B cell (primary cell): ENCODE measurements at regions of chr5 and their contacts with region 1.

Region 1: GRCh38 chr5:80654391-80655230 is at the starts of genes DHFR and MSH3:
- DNase-seq: peak; percentile 94
- ATAC-seq: peak; percentile 73
- H3K4me3 ChIP-seq: peak within 1 kb of the TSS; percentile 59 to 90 (median 74)
- H3K4me3 Mint-ChIP-seq: peak within 1 kb of the TSS; percentile 93
- H3K27ac ChIP-seq: peak within 1 kb of the TSS; percentile 68 to 71
- H3K27ac Mint-ChIP-seq: peak within 1 kb of the TSS; percentile 95
- H3K4me1 ChIP-seq: peaks cover 17 to 21% of the 10 kb centered on the region in 2 donors
- H3K4me1 Mint-ChIP-seq: peaks cover 23% of the 10 kb centered on the region
- H3K27me3 ChIP-seq: no peaks in the 10 kb centered on the region
- H3K27me3 Mint-ChIP-seq: no peaks in the 10 kb centered on the region
- CTCF ChIP-seq: peak; percentile 28
- total RNA-seq, gene DHFR: 12.0 and 12.6 TPM in 2 replicates
- total RNA-seq, gene MSH3: 24.5 and 26.3 TPM in 2 replicates

Region 2: GRCh38 chr5:79990598-79991507 is 663.8 kb before region 1 on chr5 and contains the start of gene MTX3:
- CTCF ChIA-PET with region 1: no interaction called
- POLR2A ChIA-PET with region 1: no interaction called
- intact Hi-C with region 1: loop called (anchors 5 kb)
- DNase-seq: peak; percentile 89
- ATAC-seq: peak; percentile 96
- H3K4me3 ChIP-seq: peak within 1 kb of the TSS; percentile 71 to 90 (median 78)
- H3K4me3 Mint-ChIP-seq: peak within 1 kb of the TSS; percentile 81
- H3K27ac ChIP-seq: peak within 1 kb of the TSS; percentile 65 to 70
- H3K27ac Mint-ChIP-seq: peak within 1 kb of the TSS; percentile 91
- H3K4me1 ChIP-seq: peaks cover 16% of the 10 kb centered on the region in 2 donors
- H3K4me1 Mint-ChIP-seq: peaks cover 17% of the 10 kb centered on the region
- H3K27me3 ChIP-seq: no peaks in the 10 kb centered on the region
- H3K27me3 Mint-ChIP-seq: peaks cover 9% of the 10 kb centered on the region
- CTCF ChIP-seq: no peak
- total RNA-seq, gene MTX3: 21.0 and 22.0 TPM in 2 replicates

Region 3: DNA sequence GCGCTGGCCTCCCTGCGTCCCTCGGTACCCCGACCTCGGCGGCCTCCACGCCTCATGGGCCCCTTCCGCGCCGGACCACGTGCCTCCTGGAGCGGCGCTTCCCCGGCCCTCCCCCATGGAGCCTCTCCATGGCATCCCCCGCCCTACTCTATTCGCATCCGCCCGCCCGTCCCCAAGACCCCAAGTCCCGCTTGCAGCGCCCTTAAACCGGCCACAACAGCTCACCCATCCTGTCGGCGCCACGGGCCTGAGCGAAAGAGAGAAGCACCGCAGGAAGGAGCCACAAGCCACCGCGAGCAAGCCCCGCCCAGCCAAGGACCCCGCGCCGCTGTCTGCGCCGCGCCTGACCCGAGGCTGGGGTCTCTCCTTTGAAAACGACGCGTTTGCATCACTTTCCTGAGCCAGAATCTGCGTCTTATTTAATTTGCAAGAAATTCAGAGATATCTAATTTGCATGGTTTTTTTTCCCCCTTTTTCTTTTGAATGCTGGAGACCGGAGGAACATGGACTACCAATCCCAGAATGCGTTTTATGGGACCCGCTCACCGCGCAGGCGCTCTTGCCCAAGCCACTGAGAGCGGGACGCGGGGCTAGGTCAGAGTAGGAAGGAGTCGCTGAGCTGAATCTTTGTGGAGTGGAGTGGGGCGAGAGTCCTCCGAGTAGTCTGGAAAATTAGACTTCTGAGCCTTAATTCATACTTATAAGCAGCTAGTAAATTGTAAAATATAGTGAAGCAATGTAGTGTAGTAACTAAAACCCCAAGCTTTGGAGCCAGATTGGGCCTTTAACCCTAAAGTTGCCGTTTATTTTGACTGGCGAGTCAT is 1623.7 kb after region 1 on chr5 and contains the start of gene RPS23:
- CTCF ChIA-PET with region 1: no interaction called
- POLR2A ChIA-PET with region 1: no interaction called
- intact Hi-C with region 1: loop called (anchors 5 kb)
- DNase-seq: peak; percentile 93
- ATAC-seq: peak; percentile 95
- H3K4me3 ChIP-seq: peak within 1 kb of the TSS; percentile 80 to 98 (median 90)
- H3K4me3 Mint-ChIP-seq: peak within 1 kb of the TSS; percentile 91
- H3K27ac ChIP-seq: peak within 1 kb of the TSS; percentile 82 to 89
- H3K27ac Mint-ChIP-seq: peak within 1 kb of the TSS; percentile 94
- H3K4me1 ChIP-seq: peaks cover 26 to 27% of the 10 kb centered on the region in 2 donors
- H3K4me1 Mint-ChIP-seq: peaks cover 37% of the 10 kb centered on the region
- H3K27me3 ChIP-seq: no peaks in the 10 kb centered on the region
- H3K27me3 Mint-ChIP-seq: no peaks in the 10 kb centered on the region
- CTCF ChIP-seq: no peak
- total RNA-seq, gene RPS23: 3,327 and 3,420 TPM in 2 replicates